Adrenal gland (tissue), 19 donors: ENCODE measurements at regions of chr7 and their contacts with region 1.

Region 1: DNA sequence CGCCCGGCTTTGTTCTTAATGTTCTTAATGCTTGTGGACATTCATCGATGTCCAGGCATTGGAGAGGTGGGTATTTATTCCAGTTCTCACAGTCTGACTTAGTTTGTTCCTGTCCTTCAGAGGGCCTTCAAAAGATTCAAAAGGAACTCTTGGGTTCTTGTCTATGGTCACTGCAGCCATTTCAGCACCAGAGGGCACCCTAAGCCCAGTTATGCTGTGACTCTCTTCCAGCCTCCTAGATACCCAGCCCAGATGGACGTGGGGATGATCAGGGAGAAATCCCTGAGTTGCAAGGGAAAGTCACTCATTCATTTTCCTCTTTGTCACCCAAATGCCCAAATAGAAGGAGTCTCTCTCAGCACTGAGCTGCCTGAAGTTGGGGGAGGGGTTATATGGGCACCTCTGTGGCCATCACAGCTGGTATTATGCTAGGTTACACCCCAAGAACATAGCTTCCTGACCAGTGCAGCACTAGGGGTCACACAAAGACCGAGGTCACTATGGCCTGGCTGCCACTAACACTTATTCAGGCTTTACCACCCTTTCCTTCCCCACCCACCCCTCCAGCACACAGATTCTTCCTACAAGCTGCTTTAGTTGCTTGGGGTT is 26.5 kb upstream of the CCDC126 start:
- DNase-seq: peak; percentile 59 to 90 (median 82)
- H3K4me3 ChIP-seq: no peak overlapping the region
- H3K27ac ChIP-seq: no peak overlapping the region
- H3K4me1 ChIP-seq: no peaks in the 10 kb centered on the region
- H3K27me3 ChIP-seq: peaks cover 11% of the 10 kb centered on the region
- CTCF ChIP-seq: peak; percentile 81 to 96 (median 91)
- POLR2A ChIP-seq: no peak

Region 2: GRCh38 chr7:23712368-23713284 is 141.9 kb after region 1 on chr7:
- intact Hi-C with region 1: loop called (anchors 2 to 5 kb)
- DNase-seq: no peak
- H3K4me3 ChIP-seq: no peak overlapping the region
- H3K27ac ChIP-seq: no peak overlapping the region
- H3K4me1 ChIP-seq: no peaks in the 10 kb centered on the region
- H3K27me3 ChIP-seq: no peaks in the 10 kb centered on the region
- CTCF ChIP-seq: peak; percentile 31 to 81 (median 68)
- POLR2A ChIP-seq: no peak